GM10248 (cell line): ENCODE measurements at regions of chr6 and their contacts with region 1.

Region 1: GRCh38 chr6:6676910-6677441 is 88.5 kb downstream of the LY86 start:
- DNase-seq: peak; percentile 73
- CTCF ChIP-seq: peak; percentile 90

Region 2: DNA sequence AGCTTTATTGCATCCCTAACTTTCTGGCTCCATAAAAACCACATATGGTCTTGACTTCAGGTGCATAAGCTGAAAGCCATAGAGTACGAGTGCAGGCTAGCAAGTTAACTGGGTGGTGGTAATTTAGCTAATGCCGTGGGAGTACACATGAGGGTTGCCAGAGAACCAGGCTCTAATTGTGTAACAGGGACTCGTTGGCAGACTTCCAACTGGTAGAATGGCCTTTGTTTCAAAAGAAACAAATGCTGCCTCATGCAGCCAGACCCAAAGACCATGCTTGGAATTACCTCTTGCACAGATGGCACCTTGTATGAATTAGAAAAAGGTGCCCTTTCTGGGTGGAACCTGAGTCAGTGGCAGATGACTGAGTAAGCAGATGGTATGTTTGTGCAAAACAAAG is 15.3 kb before region 1 on chr6:
- CTCF ChIA-PET with region 1: interaction called, 69 read pairs
- POLR2A ChIA-PET with region 1: no interaction called
- DNase-seq: no peak
- CTCF ChIP-seq: no peak